CD4-positive, alpha-beta T cell (primary cell): ENCODE measurements at regions of chr11 and their contacts with region 1.

Region 1: GRCh38 chr11:62726915-62727763 is at the start of gene HNRNPUL2:
- DNase-seq: peak; percentile 96 to 100 (median 98)
- ATAC-seq: peak; percentile 80
- H3K4me3 ChIP-seq: peak within 1 kb of the TSS; percentile 65
- H3K4me3 Mint-ChIP-seq: peak within 1 kb of the TSS; percentile 93
- H3K27ac ChIP-seq: peak within 1 kb of the TSS; percentile 93 to 97
- H3K27ac Mint-ChIP-seq: peak within 1 kb of the TSS; percentile 98
- H3K4me1 ChIP-seq: peaks cover 52% of the 10 kb centered on the region
- H3K4me1 Mint-ChIP-seq: peaks cover 73% of the 10 kb centered on the region
- H3K27me3 ChIP-seq: no peaks in the 10 kb centered on the region
- H3K27me3 Mint-ChIP-seq: no peaks in the 10 kb centered on the region
- CTCF ChIP-seq: no peak
- total RNA-seq, gene HNRNPUL2: 35.2 to 37.6 TPM

Region 2: GRCh38 chr11:62069986-62070919 is 656.9 kb before region 1 on chr11:
- CTCF ChIA-PET with region 1: no interaction called
- POLR2A ChIA-PET with region 1: no interaction called
- intact Hi-C with region 1: no loop called
- DNase-seq: no peak
- ATAC-seq: no peak
- H3K4me3 ChIP-seq: no peak overlapping the region
- H3K4me3 Mint-ChIP-seq: no peak overlapping the region
- H3K27ac ChIP-seq: no peak overlapping the region
- H3K27ac Mint-ChIP-seq: no peak overlapping the region
- H3K4me1 ChIP-seq: no peaks in the 10 kb centered on the region
- H3K4me1 Mint-ChIP-seq: no peaks in the 10 kb centered on the region
- H3K27me3 ChIP-seq: no peaks in the 10 kb centered on the region
- H3K27me3 Mint-ChIP-seq: peaks cover 3% of the 10 kb centered on the region
- CTCF ChIP-seq: no peak

Region 3: DNA sequence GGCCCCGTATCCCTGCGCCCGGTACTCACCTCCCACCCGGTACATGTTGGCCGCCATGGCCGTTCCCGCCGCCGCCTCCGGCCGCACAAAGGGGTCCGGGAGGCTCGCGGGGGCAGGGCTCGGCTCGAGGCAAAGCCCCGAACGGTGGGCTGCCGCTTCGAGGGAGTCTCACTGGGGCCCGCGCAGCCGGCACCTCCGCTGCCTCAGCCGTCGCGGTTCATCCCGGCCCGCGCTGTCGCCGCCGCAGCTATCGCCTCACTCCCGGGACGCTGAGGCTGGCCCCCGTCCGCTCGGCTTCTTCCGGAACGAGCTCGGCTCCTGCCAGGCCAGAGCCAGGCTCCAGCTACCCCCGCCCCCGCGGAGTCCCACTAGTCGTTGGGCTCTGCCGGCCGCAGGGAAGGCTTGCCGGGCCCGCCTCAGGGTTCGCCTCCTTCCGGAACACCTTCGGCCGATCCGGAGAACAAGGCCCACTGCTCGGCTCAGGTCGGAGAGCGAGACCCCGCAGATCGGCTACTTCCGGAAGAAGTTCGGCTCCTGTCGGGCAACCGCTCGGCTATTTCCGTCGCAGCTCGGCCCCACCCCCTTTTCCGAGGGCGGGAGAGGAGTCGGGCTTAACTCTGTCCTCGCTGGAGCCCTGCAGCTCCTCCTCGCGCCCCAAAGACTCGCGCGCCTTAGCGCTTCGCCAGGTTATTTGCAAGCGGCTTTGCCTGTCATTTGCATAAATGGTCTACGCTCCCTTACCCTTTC is 125.6 kb before region 1 on chr11 and contains the start of gene MTA2:
- CTCF ChIA-PET with region 1: no interaction called
- POLR2A ChIA-PET with region 1: interaction called, 17 read pairs
- intact Hi-C with region 1: no loop called
- DNase-seq: peak; percentile 98 to 100 (median 99)
- ATAC-seq: peak; percentile 79
- H3K4me3 ChIP-seq: peak within 1 kb of the TSS; percentile 100
- H3K4me3 Mint-ChIP-seq: peak within 1 kb of the TSS; percentile 94
- H3K27ac ChIP-seq: peak within 1 kb of the TSS; percentile 85 to 94
- H3K27ac Mint-ChIP-seq: peak within 1 kb of the TSS; percentile 93
- H3K4me1 ChIP-seq: peaks cover 46% of the 10 kb centered on the region
- H3K4me1 Mint-ChIP-seq: peaks cover 56% of the 10 kb centered on the region
- H3K27me3 ChIP-seq: no peaks in the 10 kb centered on the region
- H3K27me3 Mint-ChIP-seq: no peaks in the 10 kb centered on the region
- CTCF ChIP-seq: no peak
- total RNA-seq, gene MTA2: 167 to 172 TPM

Region 4: GRCh38 chr11:62671575-62672389 is 55.4 kb before region 1 on chr11 and contains the starts of genes LBHD1 and UQCC3:
- CTCF ChIA-PET with region 1: interaction called, 3 read pairs
- POLR2A ChIA-PET with region 1: interaction called, 41 read pairs
- intact Hi-C with region 1: loop called in 1 of 2 experiments (anchors 1 kb)
- DNase-seq: peak; percentile 50 to 89 (median 68)
- ATAC-seq: peak; percentile 74
- H3K4me3 ChIP-seq: peak within 1 kb of the TSS; percentile 98
- H3K4me3 Mint-ChIP-seq: peak within 1 kb of the TSS; percentile 91
- H3K27ac ChIP-seq: peak within 1 kb of the TSS; percentile 72 to 83
- H3K27ac Mint-ChIP-seq: peak within 1 kb of the TSS; percentile 87
- H3K4me1 ChIP-seq: peaks cover 55% of the 10 kb centered on the region
- H3K4me1 Mint-ChIP-seq: peaks cover 53% of the 10 kb centered on the region
- H3K27me3 ChIP-seq: no peaks in the 10 kb centered on the region
- H3K27me3 Mint-ChIP-seq: no peaks in the 10 kb centered on the region
- CTCF ChIP-seq: no peak
- total RNA-seq, gene LBHD1: 10.4 to 10.5 TPM
- total RNA-seq, gene UQCC3: 1.5 to 2.3 TPM

Region 5: GRCh38 chr11:62753736-62754603 is 26.8 kb after region 1 on chr11 and contains the start of gene ZBTB3:
- CTCF ChIA-PET with region 1: interaction called, 13 read pairs
- POLR2A ChIA-PET with region 1: interaction called, 228 read pairs
- intact Hi-C with region 1: loop called (anchors 1 to 2 kb)
- DNase-seq: peak; percentile 92 to 100 (median 97)
- ATAC-seq: peak; percentile 93
- H3K4me3 ChIP-seq: peak within 1 kb of the TSS; percentile 80
- H3K4me3 Mint-ChIP-seq: peak within 1 kb of the TSS; percentile 93
- H3K27ac ChIP-seq: peak within 1 kb of the TSS; percentile 84 to 88
- H3K27ac Mint-ChIP-seq: peak within 1 kb of the TSS; percentile 89
- H3K4me1 ChIP-seq: peaks cover 41% of the 10 kb centered on the region
- H3K4me1 Mint-ChIP-seq: peaks cover 35% of the 10 kb centered on the region
- H3K27me3 ChIP-seq: no peaks in the 10 kb centered on the region
- H3K27me3 Mint-ChIP-seq: no peaks in the 10 kb centered on the region
- CTCF ChIP-seq: no peak
- total RNA-seq, gene ZBTB3: 2.3 to 3.5 TPM

Region 6: DNA sequence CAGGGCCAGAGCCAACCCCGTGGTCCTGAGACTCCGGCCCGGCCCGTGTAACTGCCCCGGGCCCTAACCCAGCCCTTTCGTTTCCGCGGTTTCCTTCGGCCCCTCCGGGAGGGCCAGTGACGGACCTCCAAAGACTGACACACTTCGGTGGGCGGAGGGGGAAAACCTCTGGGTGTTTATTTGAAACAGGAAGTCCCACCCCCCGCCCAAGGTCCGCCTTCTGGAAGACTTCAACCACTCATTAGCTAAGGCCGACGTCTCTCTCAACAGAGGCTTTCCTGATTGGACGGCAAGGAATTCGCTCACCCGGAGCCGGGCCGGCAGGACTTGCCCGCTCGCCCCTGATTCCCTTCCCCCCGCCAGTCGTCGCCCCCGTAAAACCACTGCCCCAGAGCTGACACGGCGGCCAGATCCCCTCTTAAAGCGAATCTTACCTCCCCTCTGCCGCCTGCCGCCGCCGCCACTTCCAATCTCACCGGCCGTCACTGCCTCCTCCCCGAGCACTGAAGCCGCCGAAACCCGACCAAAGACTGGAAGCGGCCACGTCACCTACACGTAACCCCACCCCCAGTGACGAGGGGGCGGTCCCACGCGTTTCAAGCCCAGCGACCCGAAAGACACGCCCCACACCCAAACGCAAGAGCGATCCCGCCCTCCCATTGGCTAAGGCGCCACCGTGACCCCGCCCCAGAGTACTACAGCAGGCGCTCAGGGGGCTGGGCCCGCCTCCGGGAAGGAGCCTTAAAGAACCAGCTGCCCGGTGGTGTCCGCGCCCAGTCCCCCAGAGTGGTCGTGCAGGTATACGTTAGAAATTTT is 104.6 kb after region 1 on chr11 and contains the start of gene STX5:
- CTCF ChIA-PET with region 1: no interaction called
- POLR2A ChIA-PET with region 1: interaction called, 25 read pairs
- intact Hi-C with region 1: no loop called
- DNase-seq: peak; percentile 99 to 100 (median 99)
- ATAC-seq: peak; percentile 95
- H3K4me3 ChIP-seq: peak within 1 kb of the TSS; percentile 86
- H3K4me3 Mint-ChIP-seq: peak within 1 kb of the TSS; percentile 92
- H3K27ac ChIP-seq: peak within 1 kb of the TSS; percentile 95 to 97
- H3K27ac Mint-ChIP-seq: peak within 1 kb of the TSS; percentile 95
- H3K4me1 ChIP-seq: peaks cover 44% of the 10 kb centered on the region
- H3K4me1 Mint-ChIP-seq: peaks cover 40% of the 10 kb centered on the region
- H3K27me3 ChIP-seq: no peaks in the 10 kb centered on the region
- H3K27me3 Mint-ChIP-seq: no peaks in the 10 kb centered on the region
- CTCF ChIP-seq: no peak
- total RNA-seq, gene STX5: 93.1 to 104 TPM

Region 7: GRCh38 chr11:64317957-64318693 is 1591.0 kb after region 1 on chr11 and contains the start of gene PRDX5:
- CTCF ChIA-PET with region 1: no interaction called
- POLR2A ChIA-PET with region 1: interaction called, 11 read pairs
- intact Hi-C with region 1: no loop called
- DNase-seq: peak; percentile 88 to 99 (median 94)
- ATAC-seq: peak; percentile 72
- H3K4me3 ChIP-seq: peak within 1 kb of the TSS; percentile 96
- H3K4me3 Mint-ChIP-seq: peak within 1 kb of the TSS; percentile 92
- H3K27ac ChIP-seq: peak within 1 kb of the TSS; percentile 93 to 99
- H3K27ac Mint-ChIP-seq: peak within 1 kb of the TSS; percentile 98
- H3K4me1 ChIP-seq: peaks cover 34% of the 10 kb centered on the region
- H3K4me1 Mint-ChIP-seq: peaks cover 40% of the 10 kb centered on the region
- H3K27me3 ChIP-seq: no peaks in the 10 kb centered on the region
- H3K27me3 Mint-ChIP-seq: no peaks in the 10 kb centered on the region
- CTCF ChIP-seq: peak; percentile 40
- total RNA-seq, gene PRDX5: 31.7 to 33.1 TPM